CD8-positive, alpha-beta T cell (primary cell): ENCODE measurements at regions of chr1 and their contacts with region 1.

Region 1: GRCh38 chr1:189103956-189104355 is 1373.7 kb downstream of the BRINP3 start:
- DNase-seq: no peak
- ATAC-seq: no peak
- H3K4me3 ChIP-seq: no peak overlapping the region
- H3K4me3 Mint-ChIP-seq: no peak overlapping the region
- H3K27ac ChIP-seq: no peak overlapping the region
- H3K27ac Mint-ChIP-seq: no peak overlapping the region
- H3K4me1 ChIP-seq: no peaks in the 10 kb centered on the region
- H3K4me1 Mint-ChIP-seq: no peaks in the 10 kb centered on the region
- H3K27me3 ChIP-seq: no peaks in the 10 kb centered on the region
- H3K27me3 Mint-ChIP-seq: no peaks in the 10 kb centered on the region
- CTCF ChIP-seq: no peak

Region 2: DNA sequence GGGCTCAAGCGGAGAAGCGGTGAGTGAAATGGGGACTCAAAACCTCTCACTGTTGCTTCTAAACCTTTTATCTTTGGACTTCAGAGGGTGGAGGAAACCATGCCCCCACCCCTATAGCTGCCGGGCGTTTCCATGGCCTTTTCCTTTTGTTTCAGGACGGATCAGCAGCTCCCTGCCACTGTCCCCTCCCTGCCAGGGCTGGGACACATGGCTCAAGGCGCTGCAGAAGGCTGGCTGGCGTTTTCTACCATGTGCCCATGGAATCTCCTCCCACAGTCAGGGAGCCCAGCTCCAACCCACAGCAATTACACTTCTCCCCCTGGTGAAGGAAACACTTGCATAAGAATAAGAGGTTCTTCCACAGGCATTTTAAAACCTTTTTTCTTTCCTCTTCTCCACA is 1462.5 kb before region 1 on chr1:
- CTCF ChIA-PET with region 1: no interaction called
- POLR2A ChIA-PET with region 1: no interaction called
- intact Hi-C with region 1: loop called in 1 of 2 experiments (anchors 5 kb)
- DNase-seq: no peak
- ATAC-seq: no peak
- H3K4me3 ChIP-seq: no peak overlapping the region
- H3K4me3 Mint-ChIP-seq: no peak overlapping the region
- H3K27ac ChIP-seq: no peak overlapping the region
- H3K27ac Mint-ChIP-seq: no peak overlapping the region
- H3K4me1 ChIP-seq: no peaks in the 10 kb centered on the region
- H3K4me1 Mint-ChIP-seq: no peaks in the 10 kb centered on the region
- H3K27me3 ChIP-seq: no peaks in the 10 kb centered on the region
- H3K27me3 Mint-ChIP-seq: no peaks in the 10 kb centered on the region
- CTCF ChIP-seq: no peak

Region 3: DNA sequence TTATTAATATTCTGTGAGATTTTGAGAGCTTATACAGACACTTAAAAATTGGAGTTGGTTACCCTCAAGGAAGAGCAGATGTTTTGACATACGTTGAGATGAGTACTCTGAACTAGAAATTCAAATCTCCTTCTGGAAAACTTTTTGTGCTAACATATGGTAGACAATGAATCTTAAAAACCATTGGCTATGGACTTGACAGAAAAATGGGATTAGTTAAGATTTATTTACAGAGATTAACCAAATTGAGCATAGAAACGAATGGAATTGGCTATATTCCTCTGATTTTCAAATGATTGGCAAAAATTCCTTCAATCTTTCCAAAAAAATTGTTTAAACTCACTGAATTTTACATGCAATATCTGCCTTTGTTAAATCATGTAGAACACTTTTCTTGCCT is 19.1 kb before region 1 on chr1:
- CTCF ChIA-PET with region 1: no interaction called
- POLR2A ChIA-PET with region 1: no interaction called
- intact Hi-C with region 1: no loop called
- DNase-seq: no peak
- ATAC-seq: no peak
- H3K4me3 ChIP-seq: no peak overlapping the region
- H3K4me3 Mint-ChIP-seq: no peak overlapping the region
- H3K27ac ChIP-seq: no peak overlapping the region
- H3K27ac Mint-ChIP-seq: no peak overlapping the region
- H3K4me1 ChIP-seq: no peaks in the 10 kb centered on the region
- H3K4me1 Mint-ChIP-seq: no peaks in the 10 kb centered on the region
- H3K27me3 ChIP-seq: no peaks in the 10 kb centered on the region
- H3K27me3 Mint-ChIP-seq: no peaks in the 10 kb centered on the region
- CTCF ChIP-seq: no peak

Region 4: DNA sequence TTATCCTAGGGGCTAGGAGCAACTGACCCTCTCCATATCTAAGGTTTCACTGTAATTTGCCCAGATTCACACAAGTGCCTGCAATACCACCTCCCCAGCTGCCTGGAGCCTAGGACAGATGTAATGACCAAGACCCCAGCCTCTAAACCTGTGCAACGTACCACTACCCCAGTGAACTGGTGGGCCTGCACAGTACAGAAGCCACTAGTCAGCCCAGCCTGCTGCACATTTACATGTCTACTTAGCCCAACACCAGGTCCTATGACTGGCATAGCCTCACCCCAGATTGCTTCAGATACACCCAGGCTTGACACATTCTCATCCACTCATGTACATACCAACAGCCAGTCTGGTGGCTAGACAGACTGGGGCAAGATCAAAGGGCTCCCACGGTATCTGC is 37.1 kb after region 1 on chr1:
- CTCF ChIA-PET with region 1: no interaction called
- POLR2A ChIA-PET with region 1: no interaction called
- intact Hi-C with region 1: no loop called
- DNase-seq: no peak
- ATAC-seq: no peak
- H3K4me3 ChIP-seq: no peak overlapping the region
- H3K4me3 Mint-ChIP-seq: no peak overlapping the region
- H3K27ac ChIP-seq: no peak overlapping the region
- H3K27ac Mint-ChIP-seq: no peak overlapping the region
- H3K4me1 ChIP-seq: no peaks in the 10 kb centered on the region
- H3K4me1 Mint-ChIP-seq: no peaks in the 10 kb centered on the region
- H3K27me3 ChIP-seq: no peaks in the 10 kb centered on the region
- H3K27me3 Mint-ChIP-seq: no peaks in the 10 kb centered on the region
- CTCF ChIP-seq: no peak